ENCODE measurements at regions of chr9 and their contacts with region 1.

Region 1: DNA sequence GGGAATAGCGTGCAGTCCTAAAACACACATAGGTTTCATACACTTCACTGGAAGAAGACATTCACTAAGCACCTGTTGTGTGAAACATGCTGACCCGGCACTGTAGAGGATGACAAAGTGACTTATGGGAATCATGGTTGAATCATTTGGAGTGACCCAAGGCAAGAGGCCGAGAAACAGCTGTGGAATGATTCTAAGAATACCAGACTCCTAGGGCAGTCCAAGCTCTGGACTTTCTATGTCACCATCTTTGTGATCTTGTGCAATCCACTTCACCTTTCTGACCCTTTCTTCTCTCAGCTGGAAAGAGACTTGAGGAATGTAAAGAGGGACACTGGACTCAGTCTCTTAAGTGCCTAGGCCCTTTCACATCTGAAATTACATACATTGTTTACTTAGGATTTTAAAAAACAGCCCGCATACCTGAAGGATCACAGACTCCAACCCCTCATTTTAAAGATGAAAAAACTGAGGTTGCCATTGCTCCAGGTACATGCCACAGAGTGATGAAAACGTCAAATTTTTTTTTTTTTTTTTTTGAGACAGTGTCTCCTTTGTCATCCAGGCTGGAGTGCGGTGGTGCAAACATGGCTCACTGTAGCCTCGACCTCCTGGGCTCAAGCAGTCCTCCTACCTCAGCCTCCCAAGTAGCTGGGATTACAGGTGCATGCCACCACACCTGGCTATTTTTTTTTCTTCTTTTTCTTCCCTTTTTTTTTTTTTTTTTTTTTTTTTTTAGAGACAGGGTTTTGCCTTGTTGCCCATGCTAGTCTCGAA is 13.3 kb downstream of the MSANTD3 start:
- DNase-seq: no peak
- ATAC-seq: no peak
- H3K4me3 ChIP-seq: no peak overlapping the region
- H3K4me1 ChIP-seq: no peaks in the 10 kb centered on the region
- CTCF ChIP-seq: no peak

Region 2: GRCh38 chr9:100277166-100277979 is 162.9 kb before region 1 on chr9:
- intact Hi-C with region 1: no loop called
- DNase-seq: no peak
- ATAC-seq: no peak
- H3K4me3 ChIP-seq: no peak overlapping the region
- H3K4me1 ChIP-seq: no peaks in the 10 kb centered on the region
- CTCF ChIP-seq: no peak

Region 3: GRCh38 chr9:100598641-100599145 is 158.4 kb after region 1 on chr9:
- intact Hi-C with region 1: loop called in 1 of 2 experiments (anchors 10 kb)
- DNase-seq: peak; percentile 89 to 92 (median 90)
- ATAC-seq: peak; percentile 93
- H3K4me3 ChIP-seq: peak overlapping the region; percentile 9
- H3K4me1 ChIP-seq: peaks cover 4% of the 10 kb centered on the region
- CTCF ChIP-seq: no peak

Measured in mucosa of descending colon (tissue), 3 donors.